A549 (cell line): ENCODE measurements at regions of chr7 and their contacts with region 1.

Region 1: DNA sequence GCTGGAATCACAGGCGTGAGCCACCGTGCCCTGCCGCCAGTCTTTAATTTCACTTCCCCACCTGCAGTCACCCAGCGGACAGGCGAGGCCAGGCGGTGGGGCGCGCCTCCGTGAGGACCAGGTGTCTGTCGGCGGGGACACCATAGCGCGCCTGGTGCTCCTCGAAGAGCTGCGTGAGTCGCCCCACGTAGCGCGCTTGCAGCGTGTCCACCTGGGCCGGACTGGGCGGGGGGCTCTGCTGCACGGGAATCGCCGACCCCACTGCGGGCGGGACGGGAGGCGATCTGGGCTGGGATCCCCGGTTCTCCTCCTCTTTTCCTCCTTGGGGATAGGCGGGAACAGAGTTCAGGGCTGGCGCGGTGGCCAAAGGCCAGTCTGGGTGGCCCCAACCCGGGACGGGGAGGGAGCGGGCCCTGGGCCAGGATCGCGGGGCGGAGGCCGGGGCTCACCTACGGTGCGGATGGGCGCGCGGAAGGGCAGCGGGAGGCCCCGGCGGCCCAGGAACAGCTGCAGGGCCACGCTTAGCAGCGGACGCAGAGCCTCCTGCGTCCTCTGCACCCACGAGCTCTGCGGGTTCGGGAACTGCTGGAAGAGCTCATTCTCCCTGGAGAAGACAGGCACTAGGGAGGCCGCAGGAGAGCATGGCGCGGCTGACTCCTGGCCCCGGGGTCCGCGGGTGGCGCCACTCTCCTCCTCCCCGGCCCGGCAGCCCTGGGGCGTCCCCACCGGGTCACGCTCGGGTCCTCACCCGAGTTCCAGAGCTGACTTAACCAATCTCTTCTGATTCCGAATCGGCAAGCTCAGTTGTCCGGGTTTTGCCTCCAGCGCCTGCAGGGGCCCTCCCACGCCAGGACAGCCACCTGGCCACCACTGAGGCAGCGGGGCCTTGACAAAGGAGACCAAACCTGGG is 1.1 kb upstream of the MOGAT3 start:
- DNase-seq: no peak
- ATAC-seq: no peak
- H3K4me3 ChIP-seq: no peak overlapping the region
- H3K27ac ChIP-seq: no peak overlapping the region
- H3K4me1 ChIP-seq: peaks cover 10% of the 10 kb centered on the region
- CTCF ChIP-seq: no peak
- EP300 ChIP-seq: no peak
- POLR2A ChIP-seq: no peak
- RAD21 ChIP-seq: no peak

Region 2: DNA sequence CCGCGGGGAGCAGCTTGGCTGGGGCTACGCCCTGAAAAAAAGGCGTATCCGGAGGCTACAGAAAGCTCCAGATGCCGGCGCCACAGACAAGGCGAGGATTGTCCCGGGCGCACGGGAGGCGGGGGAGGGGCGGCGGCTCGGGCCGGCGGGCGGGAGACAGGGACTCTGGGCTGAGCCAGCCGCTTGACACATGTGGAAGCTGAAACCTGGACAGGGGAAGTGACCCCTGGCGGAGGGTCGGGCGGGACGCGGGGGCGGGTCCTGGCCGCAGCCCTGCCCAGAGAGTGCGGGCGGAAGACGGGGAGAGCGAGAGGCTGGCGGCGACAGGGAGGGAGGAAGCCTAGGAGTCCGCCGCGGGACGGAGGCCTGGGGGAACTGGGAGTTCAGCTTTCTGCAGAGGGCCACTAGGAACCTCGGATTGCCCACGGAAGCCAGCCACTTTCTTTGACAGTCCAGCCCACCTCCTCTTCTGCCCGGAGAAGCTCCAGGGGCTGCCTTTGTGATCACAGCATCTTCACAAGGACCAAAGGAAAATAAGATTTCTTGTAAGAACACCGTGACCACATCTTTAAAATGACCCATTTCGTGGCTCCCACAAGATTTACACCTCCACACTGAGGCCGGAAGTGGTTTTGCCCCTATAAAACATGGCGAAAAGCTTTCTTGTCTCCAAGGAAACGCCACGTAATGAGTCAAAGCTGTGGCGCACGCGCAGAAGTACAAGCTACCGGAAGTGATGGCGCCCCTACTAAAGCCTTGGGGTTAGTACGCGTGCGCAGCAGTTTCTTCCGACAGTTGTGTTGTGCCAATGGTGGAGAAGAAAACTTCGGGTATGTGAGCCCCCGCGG is 15.7 kb after region 1 on chr7 and contains the starts of genes PLOD3 and ZNHIT1:
- CTCF ChIA-PET with region 1: interaction called, 13 read pairs
- POLR2A ChIA-PET with region 1: interaction called, 4 read pairs
- DNase-seq: peak; percentile 98 to 100
- ATAC-seq: peak; percentile 92 to 94
- H3K4me3 ChIP-seq: peak within 1 kb of the TSS; percentile 97
- H3K27ac ChIP-seq: peak within 1 kb of the TSS; percentile 90 to 98
- H3K4me1 ChIP-seq: peaks cover 17% of the 10 kb centered on the region
- CTCF ChIP-seq: no peak; the same call in 1 of the 3 replicates
- EP300 ChIP-seq: no peak
- POLR2A ChIP-seq: peak; percentile 73
- RAD21 ChIP-seq: no peak; a peak in 1 of 5 replicates
- polyA plus RNA-seq, gene PLOD3: 21.1 and 26.0 TPM in 2 replicates
- polyA plus RNA-seq, gene ZNHIT1: 29.5 and 33.2 TPM in 2 replicates